ENCODE measurements at regions of chr13 and their contacts with region 1.

Region 1: DNA sequence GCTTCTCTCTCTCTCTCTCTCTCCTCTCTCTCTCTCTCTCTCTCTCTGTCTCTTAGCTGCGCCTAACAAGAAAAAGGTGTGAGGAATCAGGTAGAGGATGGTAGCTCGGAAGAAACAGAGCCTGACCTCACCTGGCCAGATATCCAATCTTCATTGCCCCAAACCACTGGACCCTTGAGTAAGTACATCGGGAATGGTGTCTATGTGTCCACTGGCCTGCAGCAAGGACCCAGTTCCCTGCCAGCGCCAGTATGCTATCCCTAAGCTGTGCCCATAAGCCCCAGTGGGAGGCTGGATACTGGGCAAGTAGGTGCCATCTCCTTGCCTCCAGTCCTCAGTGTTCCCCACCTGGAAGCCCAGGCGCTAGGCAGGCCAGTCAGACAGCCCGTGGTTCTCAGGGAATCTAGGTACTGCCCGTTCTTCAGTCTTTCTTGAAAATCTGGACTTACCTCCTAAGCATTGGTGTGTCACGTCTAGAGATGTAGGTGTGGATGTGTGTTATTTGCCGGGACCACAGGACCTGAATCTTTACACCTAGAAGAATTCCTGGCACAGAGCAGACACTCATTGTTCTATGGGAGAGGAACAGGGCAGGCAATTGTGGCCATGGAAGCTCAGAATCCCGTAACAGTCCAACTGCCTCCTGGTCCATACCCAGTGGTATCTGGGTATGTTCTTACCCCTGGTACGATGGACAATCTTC is 7.3 kb downstream of the URAD start:
- DNase-seq: no peak
- H3K4me3 Mint-ChIP-seq: no peak overlapping the region
- H3K27ac Mint-ChIP-seq: no peak overlapping the region
- H3K4me1 Mint-ChIP-seq: peaks cover 14% of the 10 kb centered on the region
- H3K27me3 Mint-ChIP-seq: peaks cover 79% of the 10 kb centered on the region

Region 2: GRCh38 chr13:27953676-27954405 is 27.3 kb before region 1 on chr13:
- CTCF ChIA-PET with region 1: interaction called, 17 read pairs
- DNase-seq: peak; percentile 69
- H3K4me3 Mint-ChIP-seq: peak overlapping the region; percentile 60
- H3K27ac Mint-ChIP-seq: peak overlapping the region; percentile 67
- H3K4me1 Mint-ChIP-seq: peaks cover 13% of the 10 kb centered on the region
- H3K27me3 Mint-ChIP-seq: peaks cover 77% of the 10 kb centered on the region